Posterior cingulate gyrus (tissue), 11 donors: ENCODE measurements at regions of chr5 and their contacts with region 1.

Region 1: DNA sequence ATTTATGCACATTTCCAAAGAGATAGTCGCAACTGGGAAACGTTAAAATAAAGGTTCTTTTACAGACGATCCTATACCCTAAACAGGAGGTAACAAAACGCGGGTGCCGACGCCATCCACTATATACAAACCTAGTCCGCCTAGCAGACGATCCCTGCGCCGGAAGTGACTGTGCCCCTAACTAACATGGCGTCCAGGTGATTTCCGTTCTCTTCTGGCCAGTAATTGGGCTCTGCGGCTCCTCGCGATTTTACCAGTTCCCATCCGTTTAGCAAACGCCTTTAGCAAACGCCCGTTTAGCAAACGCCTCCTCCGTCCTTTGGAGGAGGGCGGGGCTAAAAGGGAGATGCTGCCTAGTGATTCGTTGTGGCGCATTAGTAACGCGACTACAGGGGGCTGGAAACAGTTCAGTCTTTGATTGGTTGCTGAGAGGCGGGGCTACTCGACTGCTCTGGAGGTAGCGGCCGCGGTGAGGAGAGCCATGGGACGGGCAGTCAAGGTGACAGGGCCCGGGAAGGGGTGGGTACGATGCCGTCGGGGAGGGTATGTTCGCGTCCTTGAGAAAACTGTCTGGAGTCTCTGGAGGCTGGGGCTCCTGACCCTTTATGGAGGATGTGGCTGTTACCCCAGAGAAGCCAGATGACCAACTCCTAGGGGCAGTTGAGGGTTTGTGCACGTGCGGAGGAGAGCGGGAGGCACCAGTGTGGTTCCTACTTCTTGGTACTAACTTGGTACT is at the start of gene LYRM7:
- DNase-seq: peak; percentile 88 to 99 (median 96)

Region 2: DNA sequence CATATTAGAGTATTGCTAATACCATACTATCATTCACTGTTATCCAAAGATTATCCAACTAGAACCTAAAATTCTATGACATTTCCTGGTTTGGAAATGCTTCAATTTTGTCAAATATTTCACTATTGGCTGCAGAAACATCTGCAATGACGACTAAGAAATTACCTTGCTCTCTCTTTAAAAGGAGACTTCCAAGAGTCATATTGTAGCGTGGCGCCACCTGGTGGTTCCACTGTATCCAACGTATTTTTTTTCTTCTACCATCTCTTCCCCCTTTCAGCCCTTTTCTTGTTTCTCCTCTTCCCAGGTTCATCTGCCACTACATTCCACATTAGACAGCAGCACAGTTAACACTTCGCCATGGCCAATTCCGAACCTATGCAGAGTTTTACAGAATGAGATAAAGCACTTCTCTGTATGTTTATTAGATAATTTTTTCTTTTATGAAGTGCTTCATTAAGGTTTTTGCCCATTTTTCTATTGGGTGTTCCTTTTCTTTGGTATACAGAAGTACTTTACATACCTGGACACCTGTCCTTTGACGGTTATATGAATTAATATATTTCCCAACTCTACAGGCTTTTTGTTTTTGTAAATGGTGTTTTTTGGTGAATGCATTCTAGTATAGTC is 246.6 kb after region 1 on chr5:
- intact Hi-C with region 1: loop called (anchors 1 kb)
- DNase-seq: peak; percentile 54 to 94 (median 84)